ENCODE measurements at regions of chrX and their contacts with region 1.

Region 1: DNA sequence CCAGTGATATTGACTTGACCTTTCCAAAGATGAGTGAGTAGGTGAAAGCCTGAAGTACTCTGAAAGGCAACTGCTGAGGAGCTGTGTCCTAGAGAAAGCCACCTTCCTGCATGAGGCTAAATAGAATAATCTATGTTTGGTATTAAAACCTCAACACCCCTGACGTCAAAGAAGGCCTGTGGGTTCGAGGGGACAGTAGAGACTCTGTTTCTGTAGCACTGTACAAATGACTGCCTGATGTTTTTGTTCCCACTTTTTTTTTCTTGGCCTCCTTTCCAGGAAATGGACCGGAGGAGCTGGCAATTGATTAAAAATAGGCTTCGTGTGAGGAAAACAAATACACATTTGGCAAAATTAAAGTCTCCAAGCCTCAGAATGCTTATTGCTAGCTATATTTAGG is 29.5 kb downstream of the TMEM255A start:
- DNase-seq: no peak
- H3K4me3 Mint-ChIP-seq: no peak overlapping the region
- H3K27ac Mint-ChIP-seq: no peak overlapping the region
- H3K4me1 Mint-ChIP-seq: no peaks in the 10 kb centered on the region
- H3K27me3 Mint-ChIP-seq: peaks cover 28% of the 10 kb centered on the region
- CTCF ChIP-seq: no peak

Region 2: DNA sequence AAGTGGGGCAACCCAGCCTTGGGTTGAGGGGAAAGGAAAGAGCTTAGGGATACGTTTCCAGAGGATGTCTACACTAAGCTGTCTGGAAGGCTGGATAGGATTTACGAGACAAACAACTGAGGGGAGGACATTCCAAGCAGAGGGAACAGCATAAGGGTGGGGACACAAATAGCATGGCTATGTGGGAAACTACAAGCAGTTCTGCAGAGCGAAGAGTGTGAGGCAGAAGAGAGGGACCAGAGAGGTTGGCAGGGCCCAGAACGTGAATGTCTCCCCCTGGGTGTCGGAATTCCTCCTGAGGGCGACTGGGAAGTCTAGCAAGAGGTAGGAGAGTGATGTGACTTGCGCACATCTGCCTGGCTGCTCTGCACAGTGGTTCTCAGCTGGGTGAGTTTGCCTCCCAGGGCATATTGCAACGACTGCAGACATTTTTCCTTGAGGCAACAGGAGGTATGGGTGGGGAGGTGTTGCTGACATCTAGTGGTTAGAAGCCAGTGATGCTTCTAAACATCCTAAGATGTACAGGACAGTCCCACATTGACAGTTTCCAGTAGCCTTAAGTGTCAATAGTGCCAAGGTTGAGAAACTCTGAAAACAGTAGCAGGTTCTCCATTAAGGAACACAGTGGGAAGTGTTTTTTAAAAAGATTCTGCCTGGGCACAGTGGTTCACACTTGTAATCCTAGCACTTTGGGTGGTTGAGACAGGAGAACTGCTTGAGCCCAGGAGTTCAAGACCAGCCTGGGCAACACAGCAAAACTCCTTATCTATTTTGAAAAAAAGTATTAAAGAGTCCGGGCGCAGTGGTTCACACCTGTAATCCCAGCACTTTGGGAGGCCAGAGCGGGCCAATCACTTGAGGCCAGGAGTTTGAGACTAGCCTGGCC is 401.0 kb before region 1 on chrX:
- CTCF ChIA-PET with region 1: no interaction called
- POLR2A ChIA-PET with region 1: no interaction called
- intact Hi-C with region 1: no loop called
- DNase-seq: peak; percentile 64
- H3K4me3 Mint-ChIP-seq: no peak overlapping the region
- H3K27ac Mint-ChIP-seq: peak overlapping the region; percentile 44
- H3K4me1 Mint-ChIP-seq: no peaks in the 10 kb centered on the region
- H3K27me3 Mint-ChIP-seq: no peaks in the 10 kb centered on the region
- CTCF ChIP-seq: peak; percentile 73

Region 3: GRCh38 chrX:120015145-120016067 is 266.4 kb before region 1 on chrX:
- CTCF ChIA-PET with region 1: no interaction called
- POLR2A ChIA-PET with region 1: no interaction called
- intact Hi-C with region 1: no loop called
- DNase-seq: no peak
- H3K4me3 Mint-ChIP-seq: no peak overlapping the region
- H3K27ac Mint-ChIP-seq: no peak overlapping the region
- H3K4me1 Mint-ChIP-seq: no peaks in the 10 kb centered on the region
- H3K27me3 Mint-ChIP-seq: peaks cover 69% of the 10 kb centered on the region
- CTCF ChIP-seq: no peak

Region 4: GRCh38 chrX:120299928-120300327 is 18.2 kb after region 1 on chrX:
- CTCF ChIA-PET with region 1: interaction called, 11 read pairs
- POLR2A ChIA-PET with region 1: no interaction called
- intact Hi-C with region 1: no loop called
- DNase-seq: peak; percentile 48
- H3K4me3 Mint-ChIP-seq: no peak overlapping the region
- H3K27ac Mint-ChIP-seq: no peak overlapping the region
- H3K4me1 Mint-ChIP-seq: no peaks in the 10 kb centered on the region
- H3K27me3 Mint-ChIP-seq: peaks cover 31% of the 10 kb centered on the region
- CTCF ChIP-seq: no peak

Region 5: GRCh38 chrX:120310861-120311726 is 29.3 kb after region 1 on chrX and contains the start of gene TMEM255A:
- CTCF ChIA-PET with region 1: no interaction called
- POLR2A ChIA-PET with region 1: no interaction called
- intact Hi-C with region 1: no loop called
- DNase-seq: no peak
- H3K4me3 Mint-ChIP-seq: peak within 1 kb of the TSS; percentile 73
- H3K27ac Mint-ChIP-seq: no peak within 1 kb of the TSS
- H3K4me1 Mint-ChIP-seq: no peaks in the 10 kb centered on the region
- H3K27me3 Mint-ChIP-seq: peaks cover 25% of the 10 kb centered on the region
- CTCF ChIP-seq: no peak
- total RNA-seq, gene TMEM255A: not detected in 2 replicates

Region 6: DNA sequence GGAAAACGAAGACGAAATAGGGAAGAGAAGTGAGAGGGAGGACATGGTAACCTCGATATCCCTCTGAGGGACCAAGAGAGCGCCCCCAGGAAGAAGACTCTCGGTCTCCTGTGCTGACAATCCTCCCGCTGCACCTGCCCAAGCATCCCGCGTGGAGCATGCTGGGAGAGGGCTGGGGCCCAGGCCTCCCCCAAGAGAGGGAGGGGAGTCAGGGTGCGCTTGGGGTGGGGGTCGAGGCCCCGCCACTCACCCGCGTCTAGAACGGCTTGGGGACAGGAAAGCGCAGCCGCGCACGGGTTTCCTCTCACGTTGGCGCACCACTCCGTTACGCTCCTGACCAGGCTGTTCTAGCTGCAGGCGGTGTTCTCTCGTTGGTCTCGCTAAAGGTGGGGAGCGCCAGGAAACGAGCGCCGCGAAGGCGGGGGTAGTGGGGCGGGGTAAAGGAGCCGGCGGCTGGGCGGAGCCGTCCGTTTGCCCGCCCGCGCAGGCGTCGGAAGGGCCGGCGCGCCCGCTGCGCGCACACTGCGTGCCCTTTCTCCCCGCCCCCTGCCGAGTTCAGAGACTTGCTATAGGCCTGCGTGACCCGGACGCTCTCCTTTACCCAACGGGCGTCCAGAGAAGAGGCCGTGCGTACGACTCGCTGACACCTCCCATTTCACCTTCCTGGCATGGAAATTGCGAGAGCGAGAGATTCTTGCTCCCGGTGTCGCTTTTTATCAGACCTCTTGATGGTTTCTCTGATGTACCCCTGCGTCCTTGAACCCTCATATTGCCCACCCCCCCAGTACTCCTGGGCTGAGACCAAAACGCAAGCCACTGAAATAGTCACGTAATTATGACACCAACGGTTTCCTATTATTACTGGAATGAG is 348.1 kb after region 1 on chrX and contains the start of gene C1GALT1C1:
- CTCF ChIA-PET with region 1: no interaction called
- POLR2A ChIA-PET with region 1: no interaction called
- intact Hi-C with region 1: no loop called
- DNase-seq: peak; percentile 92
- H3K4me3 Mint-ChIP-seq: peak within 1 kb of the TSS; percentile 85
- H3K27ac Mint-ChIP-seq: peak within 1 kb of the TSS; percentile 95
- H3K4me1 Mint-ChIP-seq: no peaks in the 10 kb centered on the region
- H3K27me3 Mint-ChIP-seq: no peaks in the 10 kb centered on the region
- CTCF ChIP-seq: no peak
- total RNA-seq, gene C1GALT1C1: 6.3 and 8.7 TPM in 2 replicates

Measured in MCF 10A (cell line).